Cardiac septum (tissue), 1 donor: ENCODE measurements at regions of chr6 and their contacts with region 1.

Region 1: GRCh38 chr6:34953061-34954025 is 64.3 kb downstream of the ANKS1A start:
- DNase-seq: no peak

Region 2: DNA sequence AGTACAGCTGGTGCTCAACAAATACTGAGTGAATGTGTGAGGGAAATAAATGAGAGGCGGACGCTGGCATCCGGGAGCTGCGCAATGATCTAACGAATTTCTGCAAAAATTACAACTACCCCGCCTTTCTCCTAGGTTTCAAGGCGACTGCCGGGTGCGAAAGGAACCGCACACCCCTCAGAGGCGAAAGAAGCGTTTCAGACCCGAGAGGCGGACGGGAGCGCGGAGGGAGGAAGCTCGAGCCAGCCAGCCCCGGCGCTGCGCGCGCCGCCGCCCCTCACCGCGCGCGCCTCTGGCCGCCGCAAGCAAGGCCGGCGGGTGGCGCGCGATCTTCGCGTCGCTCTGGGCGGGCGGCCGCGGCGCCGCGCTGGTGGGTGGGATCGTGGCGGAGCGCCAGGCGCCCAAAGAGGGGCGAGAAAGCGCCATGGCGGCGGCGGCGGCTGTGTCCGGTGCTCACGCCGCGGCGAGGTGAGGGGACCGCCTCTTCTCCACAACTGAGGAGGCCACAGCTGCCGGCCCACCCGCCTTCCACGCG is 161.6 kb before region 1 on chr6 and contains the start of gene BLTP3A:
- intact Hi-C with region 1: loop called (anchors 10 kb)
- DNase-seq: peak; percentile 83
- total RNA-seq, gene BLTP3A: 18.1 TPM

Region 3: GRCh38 chr6:34919651-34920050 is 33.7 kb before region 1 on chr6:
- intact Hi-C with region 1: loop called (anchors 5 kb)
- DNase-seq: no peak